HCT116 (cell line): ENCODE measurements at regions of chr2 and their contacts with region 1.

Region 1: GRCh38 chr2:211745295-211746097 is 793.1 kb downstream of the ERBB4 start:
- DNase-seq: peak; percentile 51
- ATAC-seq: peak; percentile 95
- H3K4me3 ChIP-seq: no peak overlapping the region
- H3K27ac ChIP-seq: no peak overlapping the region
- H3K4me1 ChIP-seq: no peaks in the 10 kb centered on the region
- H3K27me3 ChIP-seq: no peaks in the 10 kb centered on the region
- CTCF ChIP-seq: peak; percentile 70 to 90 (median 88)
- POLR2A ChIP-seq: no peak
- RAD21 ChIP-seq: peak; percentile 85

Region 2: GRCh38 chr2:212249451-212249850 is 504.0 kb after region 1 on chr2:
- CTCF ChIA-PET with region 1: interaction called, 3 read pairs
- POLR2A ChIA-PET with region 1: no interaction called
- RAD21 ChIA-PET with region 1: no interaction called
- intact Hi-C with region 1: loop called (anchors 2 kb)
- DNase-seq: no peak
- ATAC-seq: no peak
- H3K4me3 ChIP-seq: no peak overlapping the region
- H3K27ac ChIP-seq: no peak overlapping the region
- H3K4me1 ChIP-seq: no peaks in the 10 kb centered on the region
- H3K27me3 ChIP-seq: no peaks in the 10 kb centered on the region
- CTCF ChIP-seq: peak; percentile 35 to 54 (median 48); a peak in 5 of 6 replicates
- POLR2A ChIP-seq: no peak
- RAD21 ChIP-seq: peak; percentile 61

Region 3: DNA sequence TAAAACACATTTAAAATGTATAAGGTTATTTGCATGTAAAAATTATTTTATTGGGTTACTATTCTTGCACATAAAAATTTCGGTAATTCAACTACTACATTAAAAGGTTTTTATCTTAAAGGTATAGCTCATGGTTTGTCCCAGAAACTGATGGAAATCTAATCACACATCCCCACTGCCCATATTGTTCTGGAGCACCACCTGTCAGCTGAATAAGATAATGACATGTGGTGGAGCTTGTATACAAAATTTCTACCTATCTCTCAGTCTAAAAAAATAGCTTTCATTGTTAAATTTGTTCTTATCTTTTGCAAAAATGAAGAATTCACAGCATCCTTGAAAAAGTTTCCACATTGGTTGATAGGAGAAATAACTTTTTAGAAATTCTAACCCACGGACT is 774.8 kb after region 1 on chr2:
- CTCF ChIA-PET with region 1: interaction called, 12 read pairs
- POLR2A ChIA-PET with region 1: no interaction called
- RAD21 ChIA-PET with region 1: interaction called in 1 of 2 experiments, 3 read pairs
- intact Hi-C with region 1: loop called (anchors 2 kb)
- DNase-seq: peak; percentile 7
- ATAC-seq: peak; percentile 76
- H3K4me3 ChIP-seq: no peak overlapping the region
- H3K27ac ChIP-seq: no peak overlapping the region
- H3K4me1 ChIP-seq: no peaks in the 10 kb centered on the region
- H3K27me3 ChIP-seq: no peaks in the 10 kb centered on the region
- CTCF ChIP-seq: peak; percentile 28 to 45 (median 40); a peak in 4 of 6 replicates
- POLR2A ChIP-seq: no peak
- RAD21 ChIP-seq: peak; percentile 68